ENCODE measurements at regions of chr2 and their contacts with region 1.

Region 1: DNA sequence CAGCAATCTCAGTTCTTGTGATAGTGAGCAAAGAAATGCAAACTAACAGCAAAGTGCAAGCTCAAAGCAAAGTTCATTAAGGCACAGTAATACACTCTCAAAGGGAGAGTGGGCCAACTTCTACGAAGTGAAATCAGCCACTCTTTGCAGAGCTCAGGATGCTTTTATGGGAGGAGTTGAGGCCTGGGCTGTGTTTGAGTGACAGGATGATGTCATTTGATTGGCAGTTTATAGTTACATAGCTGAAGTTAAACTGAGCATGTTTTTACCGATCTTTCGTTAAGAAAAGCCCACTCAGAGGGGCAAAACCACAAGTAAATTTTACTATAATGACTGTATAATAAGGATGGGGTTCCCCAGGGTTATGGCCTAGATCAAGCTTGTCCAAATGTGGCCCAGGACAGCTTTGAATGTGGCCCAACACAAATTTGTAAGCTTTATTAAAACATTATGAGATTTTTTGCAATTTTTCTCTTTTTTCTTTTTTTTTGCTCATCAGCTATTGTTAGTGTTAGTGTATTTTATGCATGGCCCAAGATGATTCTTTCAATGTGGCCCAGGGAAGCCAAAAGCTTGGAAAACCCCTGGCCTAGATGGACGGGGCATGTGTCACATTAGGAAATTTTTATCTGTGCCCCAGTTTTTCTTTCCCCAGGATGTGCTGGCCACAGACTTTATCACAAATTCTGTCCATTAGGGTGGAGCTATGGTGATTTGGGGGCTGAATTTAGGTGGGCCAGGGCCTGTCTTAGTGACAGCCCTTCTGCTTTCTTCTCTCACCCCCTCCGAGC is 8.3 kb upstream of the DNAH7 start:
- DNase-seq: no peak
- ATAC-seq: no peak
- H3K4me3 ChIP-seq: no peak overlapping the region
- H3K27ac ChIP-seq: no peak overlapping the region
- H3K4me1 ChIP-seq: no peaks in the 10 kb centered on the region
- H3K27me3 ChIP-seq: no peaks in the 10 kb centered on the region

Region 2: DNA sequence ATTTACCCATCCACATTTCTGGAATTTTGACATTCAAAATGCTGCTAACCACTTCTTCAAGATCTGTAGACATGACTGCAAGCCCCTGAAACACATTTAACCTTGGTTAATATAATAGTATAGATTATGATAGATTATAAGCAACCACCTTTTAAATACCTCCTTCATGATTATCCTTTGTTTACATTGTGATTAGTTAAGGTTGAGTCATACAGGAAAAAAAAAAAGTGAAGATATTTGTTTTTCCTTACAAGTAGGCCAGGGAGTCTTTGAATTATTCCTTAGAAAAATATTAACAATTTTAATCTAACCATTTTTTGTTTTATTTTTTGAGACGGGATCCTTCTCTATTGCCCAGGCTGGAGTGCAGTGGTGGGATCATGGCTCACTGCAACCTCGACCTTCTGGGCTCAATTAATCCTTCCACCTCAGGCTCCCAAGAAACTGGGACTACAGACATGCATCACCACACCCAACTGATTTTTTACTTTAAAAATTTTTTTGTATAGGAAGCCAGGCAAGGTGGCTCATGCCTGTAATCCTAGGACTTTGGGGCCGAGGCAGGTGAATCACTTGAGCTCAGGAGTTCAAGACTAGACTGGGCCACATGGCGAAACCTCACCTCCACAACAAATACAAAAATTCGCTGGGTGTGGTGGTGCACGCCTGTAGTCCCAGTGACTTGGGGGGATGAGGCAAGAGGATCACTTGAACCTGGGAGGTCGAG is 320.6 kb before region 1 on chr2:
- intact Hi-C with region 1: no loop called
- DNase-seq: no peak
- ATAC-seq: no peak
- H3K4me3 ChIP-seq: no peak overlapping the region
- H3K27ac ChIP-seq: no peak overlapping the region
- H3K4me1 ChIP-seq: no peaks in the 10 kb centered on the region
- H3K27me3 ChIP-seq: no peaks in the 10 kb centered on the region

Region 3: GRCh38 chr2:195923889-195924288 is 153.1 kb before region 1 on chr2:
- intact Hi-C with region 1: no loop called
- DNase-seq: no peak
- ATAC-seq: no peak
- H3K4me3 ChIP-seq: no peak overlapping the region
- H3K27ac ChIP-seq: no peak overlapping the region
- H3K4me1 ChIP-seq: no peaks in the 10 kb centered on the region
- H3K27me3 ChIP-seq: no peaks in the 10 kb centered on the region

Region 4: GRCh38 chr2:196278491-196278911 is 201.5 kb after region 1 on chr2:
- intact Hi-C with region 1: loop called in 1 of 2 experiments (anchors 2 kb)
- DNase-seq: peak in 1 of 2 donors; percentile 50
- ATAC-seq: no peak
- H3K4me3 ChIP-seq: no peak overlapping the region
- H3K27ac ChIP-seq: no peak overlapping the region
- H3K4me1 ChIP-seq: no peaks in the 10 kb centered on the region
- H3K27me3 ChIP-seq: no peaks in the 10 kb centered on the region

Region 5: DNA sequence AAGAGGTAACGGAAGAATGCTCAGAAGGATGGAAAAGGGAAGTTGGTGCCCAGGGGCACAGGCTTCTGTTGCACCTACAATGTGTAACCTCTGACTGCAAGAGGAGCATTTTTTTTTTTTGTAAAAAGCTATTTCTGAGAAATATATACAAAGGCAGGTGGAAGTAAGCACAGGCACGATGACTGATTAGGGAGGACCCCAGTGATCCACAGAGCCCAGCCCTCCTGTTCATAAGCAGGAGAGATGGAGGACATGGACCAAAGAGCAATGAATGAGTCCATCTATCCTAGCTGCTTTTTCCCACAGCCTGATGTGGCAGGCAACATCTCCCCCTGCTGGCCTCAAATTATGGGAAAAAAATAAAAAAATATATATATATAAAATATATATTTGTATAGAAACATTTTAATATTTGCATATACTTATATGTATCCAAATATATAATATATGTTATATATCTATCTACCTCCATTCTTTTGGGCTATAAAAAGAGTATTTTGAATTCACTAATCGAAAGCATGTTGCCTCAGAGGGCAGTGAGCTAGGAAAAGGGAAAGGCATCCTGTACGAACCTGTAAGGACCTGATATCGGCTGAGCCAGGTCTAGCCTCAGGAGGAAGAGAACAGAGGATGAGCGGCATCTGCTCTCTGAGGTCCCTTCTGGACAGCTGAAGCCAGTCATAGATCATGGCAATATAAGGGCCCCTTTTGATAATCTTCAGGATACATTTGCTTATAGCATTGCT is 260.4 kb after region 1 on chr2:
- intact Hi-C with region 1: loop called (anchors 2 to 5 kb)
- DNase-seq: no peak
- ATAC-seq: no peak
- H3K4me3 ChIP-seq: no peak overlapping the region
- H3K27ac ChIP-seq: no peak overlapping the region
- H3K4me1 ChIP-seq: no peaks in the 10 kb centered on the region
- H3K27me3 ChIP-seq: no peaks in the 10 kb centered on the region

Region 6: GRCh38 chr2:196453613-196454047 is 376.7 kb after region 1 on chr2:
- intact Hi-C with region 1: loop called in 1 of 2 experiments (anchors 10 kb)
- DNase-seq: no peak
- ATAC-seq: no peak
- H3K4me3 ChIP-seq: no peak overlapping the region
- H3K27ac ChIP-seq: no peak overlapping the region
- H3K4me1 ChIP-seq: no peaks in the 10 kb centered on the region
- H3K27me3 ChIP-seq: no peaks in the 10 kb centered on the region

Region 7: DNA sequence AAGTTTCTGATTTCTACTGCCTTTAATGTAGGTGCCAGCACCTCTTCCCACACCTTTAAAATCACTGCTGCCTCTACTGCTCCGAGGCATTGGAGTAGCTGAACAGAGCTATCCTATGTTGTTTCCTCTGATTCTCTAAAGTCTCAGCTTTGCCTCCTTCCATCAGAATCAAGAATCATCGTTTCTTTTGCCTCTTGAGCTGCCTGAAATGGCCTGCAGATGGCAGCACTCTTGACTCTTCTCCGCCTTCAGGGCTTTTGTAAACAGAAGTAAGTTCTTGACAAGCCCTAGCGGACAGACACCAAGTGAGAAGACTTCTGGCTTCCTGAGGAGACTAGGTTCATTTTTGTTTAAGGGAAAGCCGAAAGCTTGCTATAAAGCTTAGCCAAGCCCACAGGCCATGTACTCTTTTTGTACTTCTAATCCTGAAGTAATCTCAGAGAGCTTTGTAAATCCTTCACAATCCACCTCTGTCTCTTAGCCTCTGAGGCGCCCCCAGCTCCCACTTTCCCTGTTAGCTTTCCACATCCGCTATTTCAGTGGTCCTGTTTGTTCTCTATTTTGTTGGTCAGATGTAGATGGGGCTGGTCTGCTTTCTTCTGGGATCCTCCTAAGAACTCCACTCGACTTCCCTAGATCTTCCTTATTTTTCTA is 674.1 kb after region 1 on chr2:
- intact Hi-C with region 1: loop called in 1 of 2 experiments (anchors 10 kb)
- DNase-seq: peak; percentile 76 to 81
- ATAC-seq: peak; percentile 77
- H3K4me3 ChIP-seq: no peak overlapping the region
- H3K27ac ChIP-seq: no peak overlapping the region
- H3K4me1 ChIP-seq: no peaks in the 10 kb centered on the region
- H3K27me3 ChIP-seq: no peaks in the 10 kb centered on the region

Measured in aorta (tissue), 5 donors.